Activated naive CD4-positive, alpha-beta T cell treated with anti-CD3 and anti-CD28 coated beads for 36 hours (primary cell): ENCODE measurements at regions of chr4 and their contacts with region 1.

Region 1: DNA sequence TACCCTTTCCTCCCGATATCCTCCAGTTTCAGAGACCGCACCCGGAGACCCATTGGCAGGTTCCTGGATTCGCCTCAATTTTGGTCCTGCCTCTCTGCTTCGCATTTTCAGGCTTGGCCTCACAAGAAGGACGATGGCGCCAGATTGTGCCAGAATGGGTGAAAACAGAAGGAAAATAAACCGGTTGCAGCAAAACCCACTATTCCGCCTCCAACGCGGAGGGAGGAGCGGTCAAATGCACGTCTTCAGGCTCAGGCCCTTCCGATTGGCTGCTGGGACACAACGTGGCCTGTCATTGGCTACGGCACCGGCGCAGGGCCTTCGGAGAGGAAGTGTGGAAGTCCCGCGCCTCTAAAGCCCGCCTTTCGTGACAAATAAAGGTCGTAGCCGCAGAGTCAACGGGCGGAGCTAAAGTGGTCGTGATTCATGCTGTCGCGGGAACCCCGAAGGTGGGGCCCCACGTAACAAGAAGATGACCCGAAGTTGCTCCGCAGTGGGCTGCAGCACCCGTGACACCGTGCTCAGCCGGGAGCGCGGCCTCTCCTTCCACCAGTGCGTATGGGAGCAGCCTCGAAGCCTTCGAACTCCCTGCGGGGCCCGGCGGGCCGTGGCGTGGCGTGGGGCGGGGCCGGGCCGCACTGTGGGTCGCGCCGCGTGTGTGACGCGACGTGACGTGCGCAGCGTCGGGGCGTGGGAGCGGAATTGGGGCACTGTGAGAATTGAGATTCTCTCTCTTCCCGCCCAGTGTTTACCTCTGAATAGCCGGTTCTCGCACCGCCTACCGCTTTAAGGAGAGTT is at the start of gene THAP9:
- DNase-seq: peak; percentile 99
- H3K4me3 Mint-ChIP-seq: no peak within 1 kb of the TSS
- H3K27ac Mint-ChIP-seq: no peak within 1 kb of the TSS
- H3K4me1 Mint-ChIP-seq: peaks cover 41% of the 10 kb centered on the region
- H3K27me3 Mint-ChIP-seq: no peaks in the 10 kb centered on the region
- total RNA-seq, gene THAP9: 2.7 to 3.3 TPM

Region 2: DNA sequence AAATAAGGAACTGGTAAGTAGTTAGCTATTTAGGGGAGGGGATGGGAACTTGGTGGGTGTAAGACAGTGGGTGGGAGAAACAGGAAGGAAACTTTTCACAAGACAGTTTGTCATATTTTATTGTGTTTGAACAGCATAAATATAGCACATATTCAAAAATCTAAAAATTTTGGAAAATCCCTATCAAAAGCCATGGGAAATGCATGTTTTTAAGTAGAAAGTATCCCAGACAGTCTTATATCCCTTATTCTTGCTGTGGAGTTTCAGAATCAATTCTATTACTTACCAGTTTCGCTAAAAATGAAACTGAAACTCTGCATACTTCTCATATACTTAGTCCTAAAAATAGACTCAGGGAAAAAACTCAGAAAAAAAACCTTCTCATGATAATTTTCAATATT is 1406.5 kb before region 1 on chr4:
- CTCF ChIA-PET with region 1: no interaction called
- intact Hi-C with region 1: loop called (anchors 10 kb)
- DNase-seq: no peak
- H3K4me3 Mint-ChIP-seq: no peak overlapping the region
- H3K27ac Mint-ChIP-seq: peak overlapping the region; percentile 30
- H3K4me1 Mint-ChIP-seq: peaks cover 46% of the 10 kb centered on the region
- H3K27me3 Mint-ChIP-seq: no peaks in the 10 kb centered on the region

Region 3: DNA sequence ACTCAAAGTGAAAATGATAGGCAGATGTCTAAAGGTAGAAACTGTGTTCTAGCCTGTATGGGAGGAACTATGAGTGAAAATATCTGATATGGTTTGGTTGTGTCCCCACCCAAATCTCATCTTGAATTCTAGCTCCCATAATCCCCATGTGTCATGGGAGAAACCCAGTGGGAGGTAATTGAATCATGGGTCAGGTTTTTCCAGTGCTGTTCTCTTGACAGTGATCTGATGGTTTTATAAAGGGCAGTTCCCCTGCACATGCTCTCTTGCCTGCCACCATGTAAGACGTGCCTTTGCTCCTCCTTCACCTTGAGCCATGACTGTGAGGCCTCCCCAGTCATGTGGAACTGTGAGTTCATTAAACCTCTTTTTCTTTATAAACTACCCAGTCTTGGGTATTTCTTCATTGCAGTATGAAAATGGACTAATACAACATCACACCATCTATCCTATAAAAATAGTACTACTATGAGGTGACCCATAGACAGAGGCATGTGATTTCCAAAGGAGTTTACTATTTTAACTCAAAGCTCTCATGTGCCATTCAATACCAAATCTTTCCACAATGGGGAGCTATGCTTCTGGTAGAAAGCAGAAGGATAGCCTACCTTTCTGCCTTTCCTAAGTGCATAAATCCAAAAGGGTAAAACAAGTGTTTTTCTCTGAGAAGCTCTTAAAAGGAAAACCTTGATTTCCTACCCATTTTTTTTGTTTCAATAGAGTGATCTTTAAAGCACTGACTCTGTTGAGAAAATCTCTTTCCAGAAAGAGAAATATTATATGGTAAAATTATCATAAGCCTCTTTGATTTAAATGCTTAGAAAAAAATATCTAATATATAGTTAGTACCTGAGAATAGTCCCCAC is 48.4 kb before region 1 on chr4:
- CTCF ChIA-PET with region 1: interaction called, 3 read pairs
- intact Hi-C with region 1: loop called (anchors 1 kb)
- DNase-seq: no peak
- H3K4me3 Mint-ChIP-seq: no peak overlapping the region
- H3K27ac Mint-ChIP-seq: no peak overlapping the region
- H3K4me1 Mint-ChIP-seq: peaks cover 6% of the 10 kb centered on the region
- H3K27me3 Mint-ChIP-seq: no peaks in the 10 kb centered on the region

Region 4: GRCh38 chr4:83034630-83035494 is 134.3 kb after region 1 on chr4 and contains the start of gene COPS4:
- CTCF ChIA-PET with region 1: interaction called, 4 read pairs
- intact Hi-C with region 1: loop called (anchors 1 kb)
- DNase-seq: peak; percentile 98
- H3K4me3 Mint-ChIP-seq: peak within 1 kb of the TSS; percentile 95
- H3K27ac Mint-ChIP-seq: peak within 1 kb of the TSS; percentile 98
- H3K4me1 Mint-ChIP-seq: peaks cover 36% of the 10 kb centered on the region
- H3K27me3 Mint-ChIP-seq: no peaks in the 10 kb centered on the region
- total RNA-seq, gene COPS4: 37.1 to 38.6 TPM

Region 5: GRCh38 chr4:83217721-83218522 is 317.4 kb after region 1 on chr4:
- CTCF ChIA-PET with region 1: no interaction called
- intact Hi-C with region 1: loop called (anchors 1 kb)
- DNase-seq: peak; percentile 82
- H3K4me3 Mint-ChIP-seq: peak overlapping the region; percentile 28
- H3K27ac Mint-ChIP-seq: peak overlapping the region; percentile 92
- H3K4me1 Mint-ChIP-seq: peaks cover 65% of the 10 kb centered on the region
- H3K27me3 Mint-ChIP-seq: no peaks in the 10 kb centered on the region

Region 6: GRCh38 chr4:83356899-83357661 is 456.6 kb after region 1 on chr4:
- CTCF ChIA-PET with region 1: no interaction called
- intact Hi-C with region 1: loop called (anchors 1 kb)
- DNase-seq: peak; percentile 63
- H3K4me3 Mint-ChIP-seq: no peak overlapping the region
- H3K27ac Mint-ChIP-seq: peak overlapping the region; percentile 62
- H3K4me1 Mint-ChIP-seq: peaks cover 15% of the 10 kb centered on the region
- H3K27me3 Mint-ChIP-seq: no peaks in the 10 kb centered on the region

Region 7: GRCh38 chr4:83535520-83536361 is 635.2 kb after region 1 on chr4 and contains the start of gene GPAT3:
- CTCF ChIA-PET with region 1: no interaction called
- intact Hi-C with region 1: loop called (anchors 5 kb)
- DNase-seq: peak; percentile 83
- H3K4me3 Mint-ChIP-seq: peak within 1 kb of the TSS; percentile 73
- H3K27ac Mint-ChIP-seq: peak within 1 kb of the TSS; percentile 15
- H3K4me1 Mint-ChIP-seq: peaks cover 14% of the 10 kb centered on the region
- H3K27me3 Mint-ChIP-seq: peaks cover 2% of the 10 kb centered on the region
- total RNA-seq, gene GPAT3: 2.0 to 3.1 TPM